ENCODE measurements at regions of chr11 and their contacts with region 1.

Region 1: DNA sequence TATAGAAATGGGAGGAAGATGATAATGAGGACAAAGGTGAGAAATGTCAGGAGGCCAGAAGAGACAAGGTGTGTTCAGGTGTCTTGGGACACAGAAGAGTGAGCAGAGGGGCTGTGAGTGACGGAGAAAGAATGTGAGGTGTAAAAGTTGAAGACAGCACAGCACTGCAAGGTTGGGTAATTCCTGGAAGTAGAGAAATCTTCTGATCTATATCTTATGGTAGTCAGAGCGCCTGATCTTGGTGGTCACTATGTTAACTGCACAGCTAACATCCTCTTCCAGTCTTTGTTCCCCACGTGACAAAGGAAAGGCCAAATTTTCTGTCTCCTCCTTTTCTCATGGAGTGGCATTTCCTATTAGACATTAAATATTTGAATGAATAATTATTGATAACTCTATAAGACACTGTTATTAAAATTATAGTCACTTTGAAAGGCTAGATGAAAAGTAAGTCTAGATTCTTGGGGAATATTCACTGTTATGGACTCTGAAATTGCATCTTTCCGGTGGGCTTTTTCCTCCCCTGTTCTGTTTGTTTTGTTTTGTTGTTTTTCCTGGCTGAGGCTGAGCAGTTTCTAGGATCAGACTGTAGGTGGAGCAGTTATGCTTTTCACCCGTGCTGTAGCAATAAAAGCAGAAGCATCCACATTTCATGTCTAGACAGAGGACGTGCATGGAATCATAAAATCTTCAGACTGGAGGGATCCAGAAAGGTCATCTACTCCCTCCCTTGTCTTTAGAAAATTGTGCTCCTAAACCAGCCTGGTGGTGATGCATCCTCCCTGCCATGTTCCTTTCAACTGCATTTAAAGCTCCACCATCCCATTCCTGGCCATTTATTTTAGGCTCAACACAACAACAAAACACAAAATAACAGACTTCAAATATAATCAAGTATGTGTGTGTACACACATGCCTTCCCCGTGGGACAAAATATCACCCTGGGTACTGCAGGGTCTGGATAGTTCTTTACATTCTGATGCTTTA is 26.6 kb downstream of the SC5D start:
- DNase-seq: no peak
- ATAC-seq: peak; percentile 59 to 70
- H3K4me3 ChIP-seq: no peak overlapping the region
- H3K27ac ChIP-seq: no peak overlapping the region
- H3K4me1 ChIP-seq: no peaks in the 10 kb centered on the region
- H3K27me3 ChIP-seq: no peaks in the 10 kb centered on the region

Region 2: DNA sequence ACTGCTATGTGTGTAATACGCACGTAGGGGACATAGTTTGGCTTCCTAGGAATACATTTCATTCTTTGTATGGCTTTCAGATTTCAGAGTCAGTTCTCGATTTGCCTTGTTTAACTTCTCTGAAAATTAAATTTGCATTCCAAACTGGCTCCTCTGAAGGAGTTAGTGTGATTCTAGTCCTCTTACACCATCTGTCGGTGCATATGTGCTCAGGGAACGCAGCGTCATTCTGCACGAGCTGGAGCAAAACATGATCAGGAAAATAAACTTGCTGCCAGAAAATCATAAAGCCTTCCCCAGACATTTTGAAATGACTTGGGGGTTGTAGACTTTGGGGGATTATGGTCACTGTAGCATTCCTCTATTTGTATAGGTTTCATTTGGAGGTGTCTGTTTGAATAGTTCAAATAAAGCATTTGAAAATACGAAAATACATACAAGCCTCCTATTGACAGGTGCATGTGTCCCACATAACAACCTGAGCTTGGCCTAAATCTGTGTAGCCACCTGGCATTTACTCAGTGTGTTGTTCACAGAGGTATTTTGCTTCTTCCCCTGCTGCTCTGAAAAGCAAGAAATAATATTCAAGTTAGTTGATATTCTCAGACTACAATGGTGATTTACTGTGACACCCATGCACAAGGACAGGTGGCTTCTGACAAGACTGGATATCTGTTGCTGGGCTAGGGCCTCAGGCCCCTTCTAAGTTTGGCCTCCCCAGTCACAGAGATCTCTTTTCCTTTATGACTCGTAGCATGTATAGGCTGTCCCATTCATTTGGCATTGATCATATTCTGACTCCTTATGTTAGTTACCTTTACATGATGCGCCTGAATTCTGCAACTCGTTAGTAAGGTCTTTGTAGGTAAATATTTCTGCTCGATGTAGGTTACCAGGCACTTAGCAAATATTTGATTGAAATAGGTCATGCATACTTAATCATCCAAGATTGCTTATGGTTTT is 215.3 kb after region 1 on chr11:
- intact Hi-C with region 1: loop called in 1 of 4 experiments (anchors 5 kb)
- DNase-seq: peak in 2 of 3 donors; percentile 23 to 61
- ATAC-seq: peak in 1 of 2 donors; percentile 55
- H3K4me3 ChIP-seq: no peak overlapping the region
- H3K27ac ChIP-seq: no peak overlapping the region
- H3K4me1 ChIP-seq: no peaks in the 10 kb centered on the region
- H3K27me3 ChIP-seq: no peaks in the 10 kb centered on the region

Measured in right cardiac atrium (tissue), 5 donors.